CD8-positive, alpha-beta T cell (primary cell): ENCODE measurements at regions of chr1 and their contacts with region 1.

Region 1: DNA sequence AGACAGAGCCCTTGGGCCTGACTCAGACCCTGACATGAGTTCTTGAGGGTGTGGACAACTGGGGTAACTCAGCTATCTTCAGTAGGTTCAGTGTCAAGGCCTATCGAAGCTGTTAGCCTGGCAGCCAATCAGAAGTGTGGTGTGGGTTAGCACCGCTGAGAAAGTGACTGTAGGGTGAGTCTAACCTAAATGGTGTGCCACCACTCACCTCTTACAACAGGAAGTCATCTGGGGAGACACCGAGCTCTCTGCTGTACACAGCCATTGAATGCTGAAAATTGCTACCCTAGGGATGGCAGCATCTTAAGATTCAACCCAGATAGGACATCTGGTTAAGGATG is 44.6 kb downstream of the RASSF5 start:
- DNase-seq: peak; percentile 60 to 96 (median 76)
- ATAC-seq: peak; percentile 83
- H3K4me3 ChIP-seq: no peak overlapping the region
- H3K4me3 Mint-ChIP-seq: peak overlapping the region; percentile 55
- H3K27ac ChIP-seq: peak overlapping the region; percentile 33 to 84
- H3K27ac Mint-ChIP-seq: peak overlapping the region; percentile 95
- H3K4me1 ChIP-seq: peaks cover 54% of the 10 kb centered on the region
- H3K4me1 Mint-ChIP-seq: peaks cover 69% of the 10 kb centered on the region
- H3K27me3 ChIP-seq: no peaks in the 10 kb centered on the region
- H3K27me3 Mint-ChIP-seq: no peaks in the 10 kb centered on the region
- CTCF ChIP-seq: no peak

Region 2: DNA sequence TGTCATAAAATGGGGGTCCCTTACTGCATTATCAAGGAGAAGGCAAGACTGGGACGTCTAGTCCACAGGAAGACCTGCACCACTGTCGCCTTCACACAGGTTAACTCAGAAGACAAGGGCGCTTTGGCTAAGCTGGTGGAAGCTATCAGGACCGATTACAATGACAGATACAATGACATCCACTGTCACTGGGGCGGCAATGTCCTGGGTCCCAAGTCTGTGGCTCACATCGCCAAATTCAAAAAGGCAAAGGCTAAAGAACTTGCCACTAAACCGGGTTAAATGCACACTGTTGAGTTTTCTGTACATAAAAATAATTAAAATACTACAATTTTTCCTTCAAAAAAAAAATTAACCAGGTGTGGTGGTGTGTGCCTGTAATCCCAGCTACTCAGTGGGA is 22.5 kb before region 1 on chr1:
- CTCF ChIA-PET with region 1: no interaction called
- POLR2A ChIA-PET with region 1: no interaction called
- intact Hi-C with region 1: no loop called
- DNase-seq: no peak
- ATAC-seq: no peak
- H3K4me3 ChIP-seq: no peak overlapping the region
- H3K4me3 Mint-ChIP-seq: no peak overlapping the region
- H3K27ac ChIP-seq: no peak overlapping the region
- H3K27ac Mint-ChIP-seq: no peak overlapping the region
- H3K4me1 ChIP-seq: no peaks in the 10 kb centered on the region
- H3K4me1 Mint-ChIP-seq: no peaks in the 10 kb centered on the region
- H3K27me3 ChIP-seq: no peaks in the 10 kb centered on the region
- H3K27me3 Mint-ChIP-seq: no peaks in the 10 kb centered on the region
- CTCF ChIP-seq: no peak

Region 3: GRCh38 chr1:206575165-206575893 is 23.4 kb after region 1 on chr1:
- CTCF ChIA-PET with region 1: interaction called, 709 read pairs
- POLR2A ChIA-PET with region 1: interaction called, 320 read pairs
- intact Hi-C with region 1: loop called (anchors 1 kb)
- DNase-seq: peak in 6 of 9 experiments; percentile 49 to 90 (median 70)
- ATAC-seq: peak; percentile 55
- H3K4me3 ChIP-seq: peak overlapping the region; percentile 27 to 32
- H3K4me3 Mint-ChIP-seq: peak overlapping the region; percentile 71
- H3K27ac ChIP-seq: peak overlapping the region; percentile 59 to 95
- H3K27ac Mint-ChIP-seq: peak overlapping the region; percentile 96
- H3K4me1 ChIP-seq: peaks cover 98% of the 10 kb centered on the region
- H3K4me1 Mint-ChIP-seq: peaks cover 95% of the 10 kb centered on the region
- H3K27me3 ChIP-seq: no peaks in the 10 kb centered on the region
- H3K27me3 Mint-ChIP-seq: no peaks in the 10 kb centered on the region
- CTCF ChIP-seq: no peak

Region 4: DNA sequence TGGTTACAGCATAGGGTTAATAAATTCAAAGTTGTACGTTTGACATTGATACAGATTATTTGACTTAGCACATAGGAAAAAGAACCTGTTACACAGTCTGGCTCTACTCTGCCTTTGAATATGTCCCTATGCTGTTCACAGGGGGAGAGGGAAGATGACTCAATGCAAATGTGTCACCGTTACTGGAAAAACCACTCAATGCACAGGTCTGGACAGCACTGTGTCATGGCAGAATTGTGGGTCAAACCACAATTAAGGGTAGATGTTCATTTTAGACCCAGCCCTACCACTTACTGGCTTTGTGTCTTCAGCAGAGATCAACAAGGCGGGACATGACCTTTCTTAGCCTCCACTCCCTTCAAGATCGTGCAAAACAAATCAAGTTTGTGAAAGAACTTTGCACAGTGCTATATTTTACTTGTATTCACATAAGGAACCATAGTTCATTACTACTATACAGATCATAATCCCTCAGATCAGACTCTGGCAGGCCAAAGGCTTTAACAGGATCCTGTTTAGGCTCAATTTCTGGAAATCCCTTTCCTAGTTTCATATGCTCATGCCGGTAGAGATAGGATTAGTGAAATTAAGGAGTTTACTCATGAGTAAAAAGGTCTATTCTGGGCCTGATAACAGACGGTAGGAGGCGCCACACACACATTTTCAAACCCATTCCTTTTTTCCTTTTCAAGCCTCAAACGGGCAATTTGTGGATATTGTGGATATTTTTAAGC is 38.2 kb after region 1 on chr1:
- CTCF ChIA-PET with region 1: interaction called, 709 read pairs
- POLR2A ChIA-PET with region 1: interaction called, 320 read pairs
- intact Hi-C with region 1: no loop called
- DNase-seq: peak in 6 of 9 experiments; percentile 50 to 78 (median 59)
- ATAC-seq: peak; percentile 87
- H3K4me3 ChIP-seq: no peak overlapping the region
- H3K4me3 Mint-ChIP-seq: peak overlapping the region; percentile 16
- H3K27ac ChIP-seq: peak overlapping the region in 1 of 2 experiments; percentile 44
- H3K27ac Mint-ChIP-seq: peak overlapping the region; percentile 91
- H3K4me1 ChIP-seq: peaks cover 20% of the 10 kb centered on the region
- H3K4me1 Mint-ChIP-seq: peaks cover 46% of the 10 kb centered on the region
- H3K27me3 ChIP-seq: no peaks in the 10 kb centered on the region
- H3K27me3 Mint-ChIP-seq: no peaks in the 10 kb centered on the region
- CTCF ChIP-seq: peak; percentile 50